HepG2 (cell line): ENCODE measurements at regions of chr11 and their contacts with region 1.

Region 1: DNA sequence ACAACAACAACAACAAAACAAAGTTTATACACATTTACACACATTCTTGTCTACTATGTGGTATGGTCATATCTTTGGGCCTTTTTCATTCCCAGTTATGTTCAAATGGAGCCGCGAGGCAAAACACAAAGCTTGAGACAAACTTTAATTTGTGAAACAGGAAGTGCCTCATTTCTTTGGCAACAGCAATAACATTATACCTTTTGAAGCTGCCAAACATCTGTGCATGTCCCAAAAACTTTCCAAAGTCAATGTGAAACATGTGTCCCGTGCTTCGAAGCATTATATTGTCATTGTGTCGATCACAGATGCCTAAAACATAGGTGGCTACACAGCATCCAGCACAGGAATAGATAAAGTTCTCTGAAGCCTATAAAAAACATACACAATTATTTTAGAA is 25.0 kb upstream of the RPS13 start:
- DNase-seq: no peak
- ATAC-seq: no peak
- H3K4me3 ChIP-seq: no peak overlapping the region
- H3K27ac ChIP-seq: no peak overlapping the region
- H3K4me1 ChIP-seq: no peaks in the 10 kb centered on the region
- H3K27me3 ChIP-seq: no peaks in the 10 kb centered on the region; a peak in 1 of 5 replicates
- CTCF ChIP-seq: no peak
- EP300 ChIP-seq: no peak
- POLR2A ChIP-seq: no peak
- RAD21 ChIP-seq: no peak

Region 2: GRCh38 chr11:17129003-17129402 is 26.5 kb after region 1 on chr11:
- CTCF ChIA-PET with region 1: no interaction called
- POLR2A ChIA-PET with region 1: no interaction called
- in situ Hi-C with region 1: no loop called
- intact Hi-C with region 1: no loop called
- DNase-seq: no peak
- ATAC-seq: no peak
- H3K4me3 ChIP-seq: no peak overlapping the region
- H3K27ac ChIP-seq: no peak overlapping the region
- H3K4me1 ChIP-seq: no peaks in the 10 kb centered on the region
- H3K27me3 ChIP-seq: no peaks in the 10 kb centered on the region
- CTCF ChIP-seq: no peak
- EP300 ChIP-seq: no peak
- POLR2A ChIP-seq: no peak
- RAD21 ChIP-seq: no peak

Region 3: GRCh38 chr11:17267561-17267960 is 165.1 kb after region 1 on chr11:
- CTCF ChIA-PET with region 1: no interaction called
- POLR2A ChIA-PET with region 1: no interaction called
- in situ Hi-C with region 1: loop called (anchors 25 kb)
- intact Hi-C with region 1: no loop called
- DNase-seq: no peak
- ATAC-seq: no peak
- H3K4me3 ChIP-seq: no peak overlapping the region
- H3K27ac ChIP-seq: no peak overlapping the region
- H3K4me1 ChIP-seq: 0 out of 2 replicates have a peak, but pooled peaks cover under 1% of the 10 kb centered on the region
- H3K27me3 ChIP-seq: no peaks in the 10 kb centered on the region
- CTCF ChIP-seq: no peak
- EP300 ChIP-seq: no peak
- POLR2A ChIP-seq: no peak
- RAD21 ChIP-seq: no peak